Breast epithelium (tissue), 4 donors: ENCODE measurements at regions of chr11 and their contacts with region 1.

Region 1: GRCh38 chr11:91981995-91982394 is 242.6 kb upstream of the FAT3 start:
- DNase-seq: peak in 1 of 2 donors; percentile 72
- H3K4me3 ChIP-seq: no peak overlapping the region
- H3K27ac ChIP-seq: peak overlapping the region; percentile 56 to 76
- H3K4me1 ChIP-seq: no peaks in the 10 kb centered on the region
- H3K27me3 ChIP-seq: no peaks in the 10 kb centered on the region
- CTCF ChIP-seq: no peak
- POLR2A ChIP-seq: no peak

Region 2: DNA sequence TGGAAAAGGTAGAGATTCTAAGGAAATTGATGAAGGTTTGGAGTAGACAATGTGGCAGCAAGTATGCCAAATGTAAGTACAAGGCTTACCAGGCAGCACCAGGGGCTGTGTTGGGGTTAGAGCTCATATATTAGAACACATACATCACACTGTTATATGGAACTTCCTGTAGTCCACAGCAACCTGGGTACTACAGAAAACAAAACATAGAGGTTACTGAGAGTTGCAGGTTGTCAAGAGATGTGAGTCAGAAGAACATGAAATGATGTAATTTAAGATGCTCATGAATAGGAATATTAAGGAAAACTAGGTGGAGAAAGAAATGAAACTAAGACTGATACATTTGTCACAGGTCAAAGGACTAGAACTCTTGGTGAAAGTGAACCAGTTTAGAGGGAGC is 264.6 kb after region 1 on chr11:
- intact Hi-C with region 1: loop called (anchors 10 kb)
- DNase-seq: no peak
- H3K4me3 ChIP-seq: no peak overlapping the region
- H3K27ac ChIP-seq: no peak overlapping the region
- H3K4me1 ChIP-seq: no peaks in the 10 kb centered on the region
- H3K27me3 ChIP-seq: no peaks in the 10 kb centered on the region
- CTCF ChIP-seq: no peak
- POLR2A ChIP-seq: no peak